PC-9 (cell line): ENCODE measurements at regions of chr6 and their contacts with region 1.

Region 1: GRCh38 chr6:30130887-30131862 is 4.8 kb upstream of the TRIM40 start:
- DNase-seq: peak; percentile 59 to 80
- H3K4me3 ChIP-seq: no peak overlapping the region; the same call in 1 of the 2 replicates
- H3K27ac ChIP-seq: no peak overlapping the region
- H3K4me1 ChIP-seq: peaks cover 28% of the 10 kb centered on the region
- H3K27me3 ChIP-seq: no peaks in the 10 kb centered on the region
- CTCF ChIP-seq: peak; percentile 98

Region 2: GRCh38 chr6:28648035-28648877 is 1482.9 kb before region 1 on chr6:
- CTCF ChIA-PET with region 1: no interaction called
- POLR2A ChIA-PET with region 1: no interaction called
- intact Hi-C with region 1: no loop called
- DNase-seq: peak; percentile 68 to 74
- H3K4me3 ChIP-seq: peak overlapping the region; percentile 74
- H3K27ac ChIP-seq: no peak overlapping the region
- H3K4me1 ChIP-seq: peaks cover 11% of the 10 kb centered on the region; the same call in 1 of the 2 replicates
- H3K27me3 ChIP-seq: no peaks in the 10 kb centered on the region
- CTCF ChIP-seq: no peak

Region 3: DNA sequence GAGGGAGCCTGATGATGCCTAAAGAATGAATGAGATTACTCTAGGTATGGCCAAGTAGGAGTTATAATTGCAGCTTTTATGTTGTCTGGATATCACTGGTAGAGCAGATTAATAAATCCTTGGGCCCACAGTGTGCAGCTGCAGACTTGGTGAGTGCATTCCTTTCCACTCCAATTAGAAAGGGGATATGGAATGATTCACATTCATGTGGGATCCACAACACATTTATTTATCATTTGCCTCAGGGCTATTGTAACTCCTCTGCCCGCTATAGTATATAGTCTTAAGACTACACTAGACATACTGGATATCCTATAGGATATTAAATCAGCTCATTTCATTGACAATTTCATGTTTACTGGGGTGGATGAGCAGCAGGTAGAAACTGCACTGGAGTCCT is 315.1 kb before region 1 on chr6:
- CTCF ChIA-PET with region 1: no interaction called
- POLR2A ChIA-PET with region 1: no interaction called
- intact Hi-C with region 1: no loop called
- DNase-seq: no peak
- H3K4me3 ChIP-seq: no peak overlapping the region
- H3K27ac ChIP-seq: no peak overlapping the region
- H3K4me1 ChIP-seq: peaks cover 10% of the 10 kb centered on the region
- H3K27me3 ChIP-seq: no peaks in the 10 kb centered on the region
- CTCF ChIP-seq: no peak

Region 4: GRCh38 chr6:29847871-29848630 is 283.1 kb before region 1 on chr6:
- CTCF ChIA-PET with region 1: interaction called, 3 read pairs
- POLR2A ChIA-PET with region 1: no interaction called
- intact Hi-C with region 1: loop called (anchors 1 kb)
- DNase-seq: peak; percentile 43 to 79
- H3K4me3 ChIP-seq: no peak overlapping the region
- H3K27ac ChIP-seq: no peak overlapping the region
- H3K4me1 ChIP-seq: no peaks in the 10 kb centered on the region
- H3K27me3 ChIP-seq: no peaks in the 10 kb centered on the region
- CTCF ChIP-seq: peak; percentile 95

Region 5: DNA sequence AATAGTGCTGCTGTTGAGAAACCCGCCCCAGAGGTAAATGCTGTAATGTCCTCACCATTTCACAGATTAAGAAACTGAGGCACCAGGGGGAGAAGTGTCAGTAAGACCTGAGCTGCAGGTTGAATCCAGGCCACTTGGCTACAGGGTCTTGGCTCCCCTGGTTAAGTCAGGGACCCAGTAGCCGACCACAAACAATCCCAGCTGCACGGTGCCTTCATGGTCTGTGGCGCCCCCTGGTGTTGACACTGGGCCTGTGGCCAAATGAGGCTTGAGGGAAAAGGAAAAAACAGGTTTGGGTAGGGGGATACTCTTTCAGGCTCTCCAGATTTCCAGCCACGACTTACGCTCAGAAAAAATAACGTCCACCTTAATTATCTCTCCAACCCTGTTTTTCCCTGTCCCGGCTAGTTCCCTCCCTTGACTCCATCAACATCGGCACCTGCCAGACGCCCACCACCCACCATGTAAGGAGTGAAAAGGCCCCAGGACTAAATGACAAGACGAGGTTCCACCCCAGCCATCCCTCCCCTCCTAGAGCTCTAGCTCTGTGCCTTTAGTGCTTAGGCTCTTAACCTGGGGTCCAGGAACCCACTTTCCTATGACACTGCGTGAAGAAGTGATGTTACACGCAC is 117.8 kb before region 1 on chr6:
- CTCF ChIA-PET with region 1: interaction called, 4 read pairs
- POLR2A ChIA-PET with region 1: no interaction called
- intact Hi-C with region 1: loop called (anchors 2 kb)
- DNase-seq: no peak
- H3K4me3 ChIP-seq: no peak overlapping the region
- H3K27ac ChIP-seq: no peak overlapping the region
- H3K4me1 ChIP-seq: no peaks in the 10 kb centered on the region
- H3K27me3 ChIP-seq: no peaks in the 10 kb centered on the region
- CTCF ChIP-seq: peak; percentile 88

Region 6: DNA sequence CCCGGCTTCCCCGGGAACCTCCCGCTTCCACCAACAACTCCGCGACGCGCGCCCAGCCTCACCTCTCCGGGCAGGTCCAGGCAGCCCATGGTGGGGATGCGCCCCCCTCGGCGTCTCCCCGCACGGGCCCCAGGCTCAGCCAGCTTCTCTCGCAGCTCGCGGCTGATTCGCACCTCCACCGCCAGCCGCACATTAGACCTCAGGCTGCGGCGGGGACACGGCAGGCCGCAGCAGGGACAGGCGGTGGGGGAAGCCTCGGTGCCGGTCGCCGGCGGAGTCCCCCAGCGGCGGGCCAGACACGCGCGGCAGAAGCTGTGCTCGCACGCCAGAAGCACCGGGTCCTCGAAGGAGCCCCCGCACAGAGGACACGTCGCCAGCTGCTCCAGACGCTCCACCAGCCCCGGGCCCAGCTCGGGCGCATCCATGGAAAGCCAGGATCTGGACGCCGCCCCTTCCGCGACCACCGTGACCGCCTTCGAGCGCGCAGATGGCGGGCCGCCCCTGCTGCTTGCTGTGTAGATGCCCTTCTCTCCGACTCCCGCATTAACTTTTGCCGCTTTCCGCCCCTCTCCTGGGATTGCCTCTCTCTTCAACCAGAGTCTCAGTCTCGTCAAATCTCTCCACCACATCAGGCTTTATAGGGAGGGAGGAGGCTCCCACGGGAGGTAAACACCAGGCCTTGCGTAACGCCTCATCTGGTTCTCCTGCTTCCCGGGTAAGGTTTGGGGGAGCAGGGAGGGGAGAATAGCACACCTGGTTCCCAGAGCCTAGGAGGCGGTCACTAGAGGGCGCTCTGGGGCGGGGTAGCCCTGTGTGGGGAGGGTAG is 55.8 kb before region 1 on chr6 and contains the start of gene RNF39:
- CTCF ChIA-PET with region 1: no interaction called
- POLR2A ChIA-PET with region 1: no interaction called
- intact Hi-C with region 1: loop called (anchors 1 kb)
- DNase-seq: no peak
- H3K4me3 ChIP-seq: peak within 1 kb of the TSS; percentile 81
- H3K27ac ChIP-seq: peak within 1 kb of the TSS; percentile 89
- H3K4me1 ChIP-seq: peaks cover 36% of the 10 kb centered on the region
- H3K27me3 ChIP-seq: no peaks in the 10 kb centered on the region
- CTCF ChIP-seq: peak; percentile 71
- total RNA-seq, gene RNF39: 7.3 and 7.5 TPM in 2 replicates

Region 7: GRCh38 chr6:30169658-30170614 is 38.8 kb after region 1 on chr6:
- CTCF ChIA-PET with region 1: interaction called, 6 read pairs
- POLR2A ChIA-PET with region 1: no interaction called
- intact Hi-C with region 1: loop called (anchors 1 kb)
- DNase-seq: peak; percentile 11 to 51
- H3K4me3 ChIP-seq: no peak overlapping the region
- H3K27ac ChIP-seq: no peak overlapping the region
- H3K4me1 ChIP-seq: no peaks in the 10 kb centered on the region
- H3K27me3 ChIP-seq: peaks cover 28% of the 10 kb centered on the region
- CTCF ChIP-seq: peak; percentile 87

Region 8: GRCh38 chr6:30259140-30260035 is 128.2 kb after region 1 on chr6:
- CTCF ChIA-PET with region 1: no interaction called
- POLR2A ChIA-PET with region 1: no interaction called
- intact Hi-C with region 1: no loop called
- DNase-seq: peak in 1 of 2 experiments; percentile 53
- H3K4me3 ChIP-seq: no peak overlapping the region
- H3K27ac ChIP-seq: no peak overlapping the region
- H3K4me1 ChIP-seq: peaks cover 11% of the 10 kb centered on the region; the same call in 1 of the 2 replicates
- H3K27me3 ChIP-seq: peaks cover 44% of the 10 kb centered on the region
- CTCF ChIP-seq: no peak